Activated CD8-positive, alpha-beta T cell treated with anti-CD3 and anti-CD28 coated beads for 36 hours (primary cell): ENCODE measurements at regions of chr1 and their contacts with region 1.

Region 1: DNA sequence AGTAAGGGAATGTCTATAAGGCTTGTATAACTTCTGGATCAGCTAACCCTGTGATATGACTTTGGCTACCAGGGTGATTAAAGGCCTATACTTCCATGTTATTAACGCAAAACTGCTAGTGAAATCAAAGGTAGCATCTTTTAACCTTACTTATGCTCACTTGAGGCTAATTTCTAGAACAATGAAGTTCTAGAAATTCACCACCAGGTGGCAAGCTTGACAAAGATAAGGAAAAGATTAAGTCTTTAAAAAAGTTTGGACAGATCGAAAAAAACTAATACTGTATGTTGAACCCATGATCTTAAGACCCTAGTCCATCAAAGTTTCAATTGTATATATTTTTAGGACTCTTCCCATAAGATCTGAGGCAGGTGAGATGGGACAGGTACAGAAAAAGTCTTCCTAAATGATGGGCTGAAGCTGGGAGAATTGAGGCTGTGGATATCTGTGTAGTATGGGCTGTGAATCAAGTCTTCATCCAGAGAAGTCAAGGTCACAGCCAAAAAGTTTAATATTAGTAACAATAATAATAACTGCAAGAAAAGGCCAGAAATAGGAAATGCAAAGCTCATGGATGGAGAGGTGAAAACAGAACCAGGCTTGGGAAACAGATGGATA is 18.8 kb downstream of the KYAT3 start:
- DNase-seq: no peak
- ATAC-seq: peak; percentile 68
- H3K4me3 Mint-ChIP-seq: no peak overlapping the region
- H3K27ac Mint-ChIP-seq: no peak overlapping the region
- H3K4me1 Mint-ChIP-seq: peaks cover 32% of the 10 kb centered on the region
- H3K27me3 Mint-ChIP-seq: no peaks in the 10 kb centered on the region
- CTCF ChIP-seq: peak; percentile 78

Region 2: GRCh38 chr1:88763649-88764406 is 209.8 kb before region 1 on chr1:
- CTCF ChIA-PET with region 1: no interaction called
- POLR2A ChIA-PET with region 1: no interaction called
- intact Hi-C with region 1: no loop called
- DNase-seq: no peak
- ATAC-seq: no peak
- H3K4me3 Mint-ChIP-seq: no peak overlapping the region
- H3K27ac Mint-ChIP-seq: no peak overlapping the region
- H3K4me1 Mint-ChIP-seq: peaks cover 2% of the 10 kb centered on the region
- H3K27me3 Mint-ChIP-seq: no peaks in the 10 kb centered on the region
- CTCF ChIP-seq: no peak

Region 3: GRCh38 chr1:88877382-88877825 is 96.2 kb before region 1 on chr1:
- CTCF ChIA-PET with region 1: no interaction called
- POLR2A ChIA-PET with region 1: no interaction called
- intact Hi-C with region 1: no loop called
- DNase-seq: no peak
- ATAC-seq: no peak
- H3K4me3 Mint-ChIP-seq: no peak overlapping the region
- H3K27ac Mint-ChIP-seq: no peak overlapping the region
- H3K4me1 Mint-ChIP-seq: peaks cover 49% of the 10 kb centered on the region
- H3K27me3 Mint-ChIP-seq: no peaks in the 10 kb centered on the region
- CTCF ChIP-seq: peak; percentile 85

Region 4: GRCh38 chr1:88961647-88962275 is 11.9 kb before region 1 on chr1:
- CTCF ChIA-PET with region 1: interaction called, 22 read pairs
- POLR2A ChIA-PET with region 1: no interaction called
- intact Hi-C with region 1: no loop called
- DNase-seq: no peak
- ATAC-seq: no peak
- H3K4me3 Mint-ChIP-seq: no peak overlapping the region
- H3K27ac Mint-ChIP-seq: no peak overlapping the region
- H3K4me1 Mint-ChIP-seq: peaks cover 2% of the 10 kb centered on the region
- H3K27me3 Mint-ChIP-seq: no peaks in the 10 kb centered on the region
- CTCF ChIP-seq: no peak

Region 5: GRCh38 chr1:88983791-88984559 is 10.3 kb after region 1 on chr1:
- CTCF ChIA-PET with region 1: interaction called, 39 read pairs
- POLR2A ChIA-PET with region 1: no interaction called
- intact Hi-C with region 1: no loop called
- DNase-seq: peak; percentile 48
- ATAC-seq: peak; percentile 63
- H3K4me3 Mint-ChIP-seq: peak overlapping the region; percentile 6
- H3K27ac Mint-ChIP-seq: peak overlapping the region; percentile 87
- H3K4me1 Mint-ChIP-seq: peaks cover 86% of the 10 kb centered on the region
- H3K27me3 Mint-ChIP-seq: no peaks in the 10 kb centered on the region
- CTCF ChIP-seq: peak; percentile 77